ENCODE measurements at regions of chr12 and their contacts with region 1.

Region 1: GRCh38 chr12:55073043-55074022 is 52.9 kb upstream of the OR9K2 start:
- DNase-seq: peak; percentile 50 to 79 (median 72)
- ATAC-seq: peak; percentile 76
- H3K4me3 ChIP-seq: no peak overlapping the region
- H3K4me3 Mint-ChIP-seq: no peak overlapping the region
- H3K27ac ChIP-seq: no peak overlapping the region
- H3K27ac Mint-ChIP-seq: peak overlapping the region in 2 of 9 donors; percentile 59 to 82
- H3K4me1 ChIP-seq: no peaks in the 10 kb centered on the region
- H3K4me1 Mint-ChIP-seq: peaks cover 2 to 10% (median 9%) of the 10 kb centered on the region in 7 donors
- H3K27me3 ChIP-seq: no peaks in the 10 kb centered on the region
- H3K27me3 Mint-ChIP-seq: peaks cover 23 to 35% (median 27%) of the 10 kb centered on the region in 5 donors

Region 2: DNA sequence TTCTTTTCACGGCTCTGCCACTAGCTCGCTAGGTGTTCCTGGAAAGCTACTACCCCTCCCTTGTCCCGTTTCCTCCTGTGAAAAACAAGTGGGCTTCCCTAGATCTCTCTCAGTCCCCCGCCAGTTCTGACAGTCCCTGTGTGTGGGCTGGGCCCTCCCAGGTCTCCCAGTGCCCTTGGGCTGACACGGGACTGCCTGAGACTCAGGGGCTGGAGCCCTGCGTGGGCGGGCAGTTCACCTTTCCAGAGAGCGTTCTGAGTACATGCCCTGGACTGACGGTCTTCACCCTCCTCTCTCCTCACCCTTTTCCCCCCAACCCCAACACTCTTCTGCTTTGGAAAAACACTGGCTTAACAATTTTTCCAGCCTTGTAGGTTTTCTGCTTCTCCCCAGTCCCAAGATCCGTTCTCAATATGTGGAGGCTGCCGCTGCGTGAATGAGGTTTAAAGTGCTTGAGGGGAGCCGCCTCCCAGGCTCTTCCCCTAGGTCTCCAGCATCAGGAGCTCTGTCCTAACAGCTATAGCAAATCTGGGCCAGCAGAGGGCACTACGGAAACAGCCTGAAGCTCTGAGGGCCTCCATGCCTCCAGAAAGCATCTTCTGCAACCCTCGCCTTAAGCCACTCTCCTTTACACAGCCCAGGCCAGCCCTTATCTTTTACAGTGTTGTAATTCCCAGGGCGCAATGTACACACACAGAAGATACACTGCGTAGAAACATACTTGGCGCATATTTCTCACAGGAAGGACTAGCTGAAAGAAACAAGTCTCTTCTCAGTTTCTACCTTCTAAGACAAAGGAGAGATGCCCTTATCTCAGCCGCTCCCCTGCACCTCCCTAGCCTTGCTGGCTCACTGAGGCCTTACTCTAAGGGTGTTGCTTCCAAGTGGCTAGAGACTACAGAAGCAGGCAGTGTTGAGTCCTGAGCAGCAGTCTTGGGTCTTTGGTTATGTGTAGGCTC is 414.7 kb before region 1 on chr12:
- CTCF ChIA-PET with region 1: interaction called, 6 read pairs
- POLR2A ChIA-PET with region 1: no interaction called
- intact Hi-C with region 1: loop called in 1 of 2 experiments (anchors 1 kb)
- DNase-seq: peak in 7 of 9 donors; percentile 10 to 37 (median 20)
- ATAC-seq: peak; percentile 66
- H3K4me3 ChIP-seq: no peak overlapping the region
- H3K4me3 Mint-ChIP-seq: no peak overlapping the region
- H3K27ac ChIP-seq: no peak overlapping the region
- H3K27ac Mint-ChIP-seq: no peak overlapping the region
- H3K4me1 ChIP-seq: no peaks in the 10 kb centered on the region
- H3K4me1 Mint-ChIP-seq: peaks cover 0 to 4% (median 0%) of the 10 kb centered on the region in 7 donors
- H3K27me3 ChIP-seq: peaks cover 0 to 4% of the 10 kb centered on the region in 2 donors
- H3K27me3 Mint-ChIP-seq: peaks cover 13 to 25% (median 19%) of the 10 kb centered on the region in 5 donors

Region 3: GRCh38 chr12:54749191-54749818 is 324.0 kb before region 1 on chr12:
- CTCF ChIA-PET with region 1: interaction called, 125 read pairs
- POLR2A ChIA-PET with region 1: interaction called, 15 read pairs
- intact Hi-C with region 1: loop called (anchors 1 kb)
- DNase-seq: peak in 7 of 9 donors; percentile 33 to 73 (median 63)
- ATAC-seq: peak; percentile 91
- H3K4me3 ChIP-seq: no peak overlapping the region
- H3K4me3 Mint-ChIP-seq: peak overlapping the region in 8 of 10 donors; percentile 24 to 79 (median 62)
- H3K27ac ChIP-seq: no peak overlapping the region
- H3K27ac Mint-ChIP-seq: peak overlapping the region in 6 of 9 donors; percentile 33 to 84 (median 55)
- H3K4me1 ChIP-seq: peaks cover 4 to 16% of the 10 kb centered on the region in 2 donors
- H3K4me1 Mint-ChIP-seq: peaks cover 10 to 38% (median 30%) of the 10 kb centered on the region in 7 donors
- H3K27me3 ChIP-seq: no peaks in the 10 kb centered on the region
- H3K27me3 Mint-ChIP-seq: peaks cover 0 to 26% (median 0%) of the 10 kb centered on the region in 5 donors

Region 4: GRCh38 chr12:54935235-54935951 is 137.9 kb before region 1 on chr12:
- CTCF ChIA-PET with region 1: interaction called, 11 read pairs
- POLR2A ChIA-PET with region 1: no interaction called
- intact Hi-C with region 1: loop called in 1 of 2 experiments (anchors 1 kb)
- DNase-seq: peak in 8 of 9 donors; percentile 40 to 67 (median 51)
- ATAC-seq: peak; percentile 88
- H3K4me3 ChIP-seq: no peak overlapping the region
- H3K4me3 Mint-ChIP-seq: peak overlapping the region; percentile 0 to 74 (median 62)
- H3K27ac ChIP-seq: peak overlapping the region; percentile 29
- H3K27ac Mint-ChIP-seq: peak overlapping the region; percentile 60 to 98 (median 88)
- H3K4me1 ChIP-seq: peaks cover 36 to 39% of the 10 kb centered on the region in 2 donors
- H3K4me1 Mint-ChIP-seq: peaks cover 28 to 56% (median 53%) of the 10 kb centered on the region in 7 donors
- H3K27me3 ChIP-seq: no peaks in the 10 kb centered on the region
- H3K27me3 Mint-ChIP-seq: no peaks in the 10 kb centered on the region

Region 5: DNA sequence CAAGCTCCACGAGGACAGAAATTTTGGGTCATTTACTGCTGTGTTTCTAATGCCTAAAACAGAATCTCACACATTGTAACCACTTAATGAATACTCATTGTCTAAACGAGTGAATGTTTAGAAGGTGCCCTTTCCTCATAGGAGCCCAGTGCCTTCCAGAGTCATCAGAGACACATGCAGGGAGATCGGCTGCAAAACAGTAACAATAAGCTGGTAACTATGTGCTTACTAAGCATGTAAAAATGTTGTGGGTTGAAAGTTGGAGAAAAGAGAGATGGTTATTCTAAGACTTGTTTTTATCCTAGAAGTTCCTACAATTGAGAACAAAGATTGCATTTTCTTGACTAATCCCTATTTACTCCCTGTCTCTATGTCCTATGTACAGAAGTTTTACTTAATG is 96.2 kb before region 1 on chr12:
- CTCF ChIA-PET with region 1: interaction called, 68 read pairs
- POLR2A ChIA-PET with region 1: interaction called, 7 read pairs
- intact Hi-C with region 1: no loop called
- DNase-seq: no peak
- ATAC-seq: no peak
- H3K4me3 ChIP-seq: peak overlapping the region; percentile 2
- H3K4me3 Mint-ChIP-seq: peak overlapping the region; percentile 79 to 98 (median 93)
- H3K27ac ChIP-seq: peak overlapping the region; percentile 94
- H3K27ac Mint-ChIP-seq: peak overlapping the region; percentile 57 to 98 (median 95)
- H3K4me1 ChIP-seq: peaks cover 60 to 79% of the 10 kb centered on the region in 2 donors
- H3K4me1 Mint-ChIP-seq: peaks cover 82 to 100% (median 96%) of the 10 kb centered on the region in 7 donors
- H3K27me3 ChIP-seq: no peaks in the 10 kb centered on the region
- H3K27me3 Mint-ChIP-seq: no peaks in the 10 kb centered on the region

Region 6: GRCh38 chr12:55001198-55001868 is 72.0 kb before region 1 on chr12:
- CTCF ChIA-PET with region 1: interaction called, 564 read pairs
- POLR2A ChIA-PET with region 1: interaction called, 7 read pairs
- intact Hi-C with region 1: no loop called
- DNase-seq: no peak
- ATAC-seq: peak; percentile 59
- H3K4me3 ChIP-seq: no peak overlapping the region
- H3K4me3 Mint-ChIP-seq: peak overlapping the region in 8 of 10 donors; percentile 1 to 81 (median 59)
- H3K27ac ChIP-seq: peak overlapping the region; percentile 11
- H3K27ac Mint-ChIP-seq: peak overlapping the region in 8 of 9 donors; percentile 53 to 83 (median 72)
- H3K4me1 ChIP-seq: peaks cover 0 to 16% of the 10 kb centered on the region in 2 donors
- H3K4me1 Mint-ChIP-seq: peaks cover 8 to 33% (median 21%) of the 10 kb centered on the region in 7 donors
- H3K27me3 ChIP-seq: no peaks in the 10 kb centered on the region
- H3K27me3 Mint-ChIP-seq: peaks cover 0 to 5% (median 0%) of the 10 kb centered on the region in 5 donors

Region 7: DNA sequence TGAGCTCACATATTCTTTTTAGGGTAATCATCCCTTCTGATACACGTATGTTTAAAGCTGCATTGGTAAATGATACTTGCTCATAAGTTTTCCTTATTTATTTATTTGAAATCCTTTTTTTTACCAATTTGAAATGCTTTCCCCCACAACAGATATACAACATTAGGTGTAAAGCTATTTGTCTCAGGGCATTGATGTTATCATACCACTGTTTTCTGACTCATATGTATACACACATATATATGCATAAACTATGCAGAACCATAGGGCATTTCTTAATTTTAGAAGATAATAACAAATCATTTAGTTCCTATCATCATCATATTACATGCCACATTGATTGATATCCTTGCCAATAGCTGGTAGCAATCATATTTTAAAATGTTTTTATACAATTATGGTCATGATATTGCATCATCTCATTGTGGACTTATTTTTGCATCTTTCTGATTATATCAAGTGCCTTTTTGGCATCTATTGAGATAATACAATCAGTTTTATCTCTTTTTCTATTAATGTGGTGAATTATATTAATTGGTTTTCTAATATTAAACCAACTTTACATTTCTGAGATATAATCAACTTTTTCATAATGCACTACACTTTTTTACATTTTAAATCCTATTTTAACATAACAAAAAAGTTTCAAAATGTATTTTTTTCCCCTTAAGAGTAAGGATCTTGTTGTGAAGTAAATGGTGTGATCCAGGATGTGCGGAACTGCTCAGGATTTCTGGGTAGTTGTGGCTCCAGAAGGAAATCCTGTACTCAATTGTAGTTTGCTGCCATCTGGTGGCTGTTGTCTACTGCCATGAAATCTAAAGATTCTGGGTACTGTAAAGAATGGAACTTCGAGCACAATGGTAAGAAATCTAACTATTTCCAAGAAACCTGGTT is 69.6 kb after region 1 on chr12:
- CTCF ChIA-PET with region 1: interaction called, 4 read pairs
- POLR2A ChIA-PET with region 1: no interaction called
- intact Hi-C with region 1: loop called in 1 of 2 experiments (anchors 1 kb)
- DNase-seq: peak in 6 of 9 donors; percentile 10 to 41 (median 20)
- ATAC-seq: peak; percentile 29
- H3K4me3 ChIP-seq: no peak overlapping the region
- H3K4me3 Mint-ChIP-seq: no peak overlapping the region
- H3K27ac ChIP-seq: no peak overlapping the region
- H3K27ac Mint-ChIP-seq: no peak overlapping the region
- H3K4me1 ChIP-seq: no peaks in the 10 kb centered on the region
- H3K4me1 Mint-ChIP-seq: peaks cover 0 to 6% (median 0%) of the 10 kb centered on the region in 7 donors
- H3K27me3 ChIP-seq: no peaks in the 10 kb centered on the region
- H3K27me3 Mint-ChIP-seq: peaks cover 0 to 35% (median 0%) of the 10 kb centered on the region in 5 donors

Measured in naive thymus-derived CD4-positive, alpha-beta T cell (primary cell).